B cell (primary cell): ENCODE measurements at regions of chr2 and their contacts with region 1.

Region 1: GRCh38 chr2:155176345-155176744 is 477.9 kb downstream of the KCNJ3 start:
- DNase-seq: no peak
- ATAC-seq: no peak
- H3K4me3 ChIP-seq: no peak overlapping the region
- H3K4me3 Mint-ChIP-seq: no peak overlapping the region
- H3K27ac ChIP-seq: no peak overlapping the region
- H3K27ac Mint-ChIP-seq: no peak overlapping the region
- H3K4me1 ChIP-seq: no peaks in the 10 kb centered on the region
- H3K4me1 Mint-ChIP-seq: no peaks in the 10 kb centered on the region
- H3K27me3 ChIP-seq: no peaks in the 10 kb centered on the region
- H3K27me3 Mint-ChIP-seq: no peaks in the 10 kb centered on the region
- CTCF ChIP-seq: no peak

Region 2: DNA sequence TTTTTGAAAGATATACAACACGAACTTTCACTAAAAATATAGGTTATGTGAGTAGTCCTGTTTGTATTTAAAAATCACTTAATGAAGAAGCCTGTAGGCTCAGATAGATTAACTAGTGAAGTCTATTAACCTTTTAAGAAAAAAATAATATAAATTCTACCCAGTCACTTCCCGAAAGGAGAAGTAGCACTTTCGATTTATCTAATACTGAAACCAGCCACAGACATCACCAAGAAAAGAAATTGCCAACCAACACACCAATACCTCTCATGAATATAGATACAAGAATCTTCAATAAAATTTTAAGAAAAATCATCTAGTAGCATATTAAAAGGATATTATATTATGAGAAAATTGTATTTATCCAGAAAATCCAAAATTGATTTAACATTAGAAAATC is 1144.1 kb before region 1 on chr2:
- CTCF ChIA-PET with region 1: no interaction called
- POLR2A ChIA-PET with region 1: interaction called, 10 read pairs
- intact Hi-C with region 1: no loop called
- DNase-seq: no peak
- ATAC-seq: no peak
- H3K4me3 ChIP-seq: no peak overlapping the region
- H3K4me3 Mint-ChIP-seq: no peak overlapping the region
- H3K27ac ChIP-seq: no peak overlapping the region
- H3K27ac Mint-ChIP-seq: no peak overlapping the region
- H3K4me1 ChIP-seq: no peaks in the 10 kb centered on the region
- H3K4me1 Mint-ChIP-seq: no peaks in the 10 kb centered on the region
- H3K27me3 ChIP-seq: no peaks in the 10 kb centered on the region
- H3K27me3 Mint-ChIP-seq: no peaks in the 10 kb centered on the region
- CTCF ChIP-seq: no peak

Region 3: DNA sequence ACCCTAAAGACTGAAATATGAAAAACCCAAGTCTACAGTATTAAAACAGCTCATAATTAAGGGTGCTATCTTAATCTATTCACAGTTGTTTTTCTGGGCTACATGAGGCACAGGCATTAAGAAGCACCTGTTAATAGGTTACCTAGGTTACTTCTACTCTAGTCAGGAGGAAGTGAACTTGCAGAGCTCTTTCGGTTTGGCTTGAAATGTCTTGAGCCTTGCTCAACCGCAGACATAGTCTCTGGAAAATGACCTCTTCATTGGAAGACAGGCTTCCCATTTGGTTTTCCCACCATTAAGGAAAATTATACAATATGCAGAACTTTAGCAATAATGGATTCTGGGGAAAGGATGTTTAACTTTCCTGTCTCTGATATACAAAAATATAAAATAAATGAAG is 620.2 kb before region 1 on chr2:
- CTCF ChIA-PET with region 1: no interaction called
- POLR2A ChIA-PET with region 1: no interaction called
- intact Hi-C with region 1: no loop called
- DNase-seq: no peak
- ATAC-seq: no peak
- H3K4me3 ChIP-seq: no peak overlapping the region
- H3K4me3 Mint-ChIP-seq: no peak overlapping the region
- H3K27ac ChIP-seq: no peak overlapping the region
- H3K27ac Mint-ChIP-seq: no peak overlapping the region
- H3K4me1 ChIP-seq: no peaks in the 10 kb centered on the region
- H3K4me1 Mint-ChIP-seq: no peaks in the 10 kb centered on the region
- H3K27me3 ChIP-seq: no peaks in the 10 kb centered on the region
- H3K27me3 Mint-ChIP-seq: no peaks in the 10 kb centered on the region
- CTCF ChIP-seq: no peak

Region 4: GRCh38 chr2:155145758-155146229 is 30.6 kb before region 1 on chr2:
- CTCF ChIA-PET with region 1: no interaction called
- POLR2A ChIA-PET with region 1: no interaction called
- intact Hi-C with region 1: no loop called
- DNase-seq: no peak
- ATAC-seq: no peak
- H3K4me3 ChIP-seq: no peak overlapping the region
- H3K4me3 Mint-ChIP-seq: no peak overlapping the region
- H3K27ac ChIP-seq: no peak overlapping the region
- H3K27ac Mint-ChIP-seq: no peak overlapping the region
- H3K4me1 ChIP-seq: no peaks in the 10 kb centered on the region
- H3K4me1 Mint-ChIP-seq: peaks cover 1% of the 10 kb centered on the region
- H3K27me3 ChIP-seq: no peaks in the 10 kb centered on the region
- H3K27me3 Mint-ChIP-seq: no peaks in the 10 kb centered on the region
- CTCF ChIP-seq: no peak

Region 5: DNA sequence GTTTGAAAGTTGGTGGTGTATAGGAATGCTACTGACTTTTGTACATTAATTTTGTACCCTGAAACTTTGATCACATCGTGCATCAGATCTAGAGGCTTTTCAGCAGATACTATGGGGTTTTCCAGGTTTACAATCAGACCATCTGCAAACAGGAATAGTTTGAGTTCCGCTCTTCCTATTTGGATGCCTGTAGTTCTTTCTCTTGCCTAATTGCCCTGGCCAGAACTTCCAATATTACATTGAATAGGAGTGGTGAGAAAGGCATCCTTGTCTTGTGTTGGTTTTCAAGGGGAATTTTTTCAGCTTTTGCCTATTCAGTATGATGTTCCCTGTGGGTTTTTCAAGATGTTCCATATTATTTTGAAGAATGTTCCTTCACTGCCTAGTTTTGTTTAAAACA is 155.7 kb after region 1 on chr2:
- CTCF ChIA-PET with region 1: no interaction called
- POLR2A ChIA-PET with region 1: no interaction called
- intact Hi-C with region 1: no loop called
- DNase-seq: no peak
- ATAC-seq: no peak
- H3K4me3 ChIP-seq: no peak overlapping the region
- H3K4me3 Mint-ChIP-seq: no peak overlapping the region
- H3K27ac ChIP-seq: no peak overlapping the region
- H3K27ac Mint-ChIP-seq: no peak overlapping the region
- H3K4me1 ChIP-seq: no peaks in the 10 kb centered on the region
- H3K4me1 Mint-ChIP-seq: no peaks in the 10 kb centered on the region
- H3K27me3 ChIP-seq: no peaks in the 10 kb centered on the region
- H3K27me3 Mint-ChIP-seq: no peaks in the 10 kb centered on the region
- CTCF ChIP-seq: no peak